ENCODE measurements at regions of chr14 and their contacts with region 1.

Region 1: DNA sequence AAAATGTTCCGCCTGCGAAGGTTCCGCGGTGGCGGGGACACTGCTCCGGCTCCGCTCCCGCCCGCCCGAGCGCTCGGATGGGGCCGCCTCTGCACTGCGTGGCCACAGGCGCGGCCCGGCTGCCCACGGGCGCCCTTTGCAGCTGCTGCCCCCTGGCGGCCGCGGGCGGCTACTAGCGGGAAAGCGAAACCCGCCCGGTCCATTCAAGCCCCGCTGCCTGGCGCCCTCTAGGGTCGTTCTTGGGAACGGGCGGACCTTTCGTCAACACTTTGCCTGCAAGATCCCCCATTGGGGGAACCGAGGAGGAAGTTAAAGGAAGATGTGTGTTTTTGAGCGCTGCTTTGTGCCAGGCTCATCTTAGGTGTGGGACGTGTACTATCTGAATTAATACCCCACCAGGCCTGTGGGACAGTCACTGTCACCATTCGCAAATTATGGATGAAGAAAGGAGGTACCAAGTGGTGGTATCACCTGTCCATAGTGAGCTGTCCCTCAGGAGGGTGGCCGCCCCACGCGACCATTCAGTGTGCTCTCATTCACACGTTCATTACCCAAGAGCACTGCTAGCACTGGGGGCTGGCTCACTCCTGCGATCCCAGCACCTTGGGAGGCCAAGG is 19.4 kb downstream of the GPR132 start:
- DNase-seq: peak; percentile 79
- H3K4me3 Mint-ChIP-seq: no peak overlapping the region
- H3K27ac Mint-ChIP-seq: no peak overlapping the region
- H3K4me1 Mint-ChIP-seq: no peaks in the 10 kb centered on the region
- H3K27me3 Mint-ChIP-seq: no peaks in the 10 kb centered on the region
- CTCF ChIP-seq: peak; percentile 100

Region 2: GRCh38 chr14:104932676-104933631 is 112.9 kb before region 1 on chr14:
- CTCF ChIA-PET with region 1: interaction called, 5 read pairs
- POLR2A ChIA-PET with region 1: interaction called, 3 read pairs
- intact Hi-C with region 1: loop called (anchors 1 kb)
- DNase-seq: peak; percentile 68
- H3K4me3 Mint-ChIP-seq: peak overlapping the region; percentile 65
- H3K27ac Mint-ChIP-seq: no peak overlapping the region
- H3K4me1 Mint-ChIP-seq: peaks cover 10% of the 10 kb centered on the region
- H3K27me3 Mint-ChIP-seq: no peaks in the 10 kb centered on the region
- CTCF ChIP-seq: peak; percentile 83

Region 3: DNA sequence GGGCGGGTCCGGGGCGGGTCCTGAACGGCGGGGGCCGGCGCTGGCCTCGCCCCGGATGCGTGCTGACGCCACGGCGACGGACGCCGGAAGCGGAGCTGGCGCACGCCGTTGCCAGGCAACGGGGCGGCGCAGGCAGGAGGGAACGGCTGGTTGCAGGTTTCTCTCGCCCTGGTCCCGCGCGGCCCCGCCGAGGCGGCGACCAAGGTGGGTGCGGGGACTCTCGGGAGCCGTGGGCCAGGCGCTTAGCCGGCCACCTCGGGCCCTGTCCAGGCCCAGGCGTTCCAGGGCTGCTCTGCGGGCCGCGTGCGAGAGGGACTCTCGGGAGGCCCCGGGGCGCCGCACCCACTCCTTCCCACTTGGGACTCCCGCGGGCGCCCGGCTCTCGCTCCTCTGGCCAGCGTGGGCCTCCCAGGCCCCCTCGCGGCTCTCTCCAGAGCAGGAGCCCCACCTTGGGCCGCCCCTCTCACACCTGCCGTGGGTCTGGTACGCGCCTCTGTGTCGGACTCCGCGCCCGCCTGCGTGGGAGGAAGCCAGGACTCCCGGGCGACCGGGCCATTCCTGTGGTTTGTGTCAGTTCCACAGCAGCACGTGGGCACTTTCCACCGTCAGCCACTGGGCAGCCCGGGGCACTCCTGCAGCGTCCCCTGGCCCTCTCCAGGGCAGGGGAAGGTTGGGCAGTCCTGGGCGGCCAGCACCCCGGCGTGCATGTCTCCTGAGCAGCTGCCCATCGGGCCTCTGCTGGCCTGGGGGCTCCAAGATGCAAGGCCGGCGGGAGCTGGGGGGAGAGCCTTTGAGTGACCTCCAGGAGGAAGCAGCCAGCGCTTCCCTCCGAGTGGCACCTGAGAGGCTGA is 59.9 kb before region 1 on chr14 and contains the start of gene CLBA1:
- CTCF ChIA-PET with region 1: interaction called, 15 read pairs
- POLR2A ChIA-PET with region 1: no interaction called
- intact Hi-C with region 1: no loop called
- DNase-seq: peak; percentile 88
- H3K4me3 Mint-ChIP-seq: peak within 1 kb of the TSS; percentile 65
- H3K27ac Mint-ChIP-seq: peak within 1 kb of the TSS; percentile 63
- H3K4me1 Mint-ChIP-seq: peaks cover 12% of the 10 kb centered on the region
- H3K27me3 Mint-ChIP-seq: no peaks in the 10 kb centered on the region
- CTCF ChIP-seq: no peak
- total RNA-seq, gene CLBA1: 20.3 and 24.3 TPM in 2 replicates

Region 4: GRCh38 chr14:105020815-105021655 is 24.8 kb before region 1 on chr14 and contains the start of gene CDCA4:
- CTCF ChIA-PET with region 1: interaction called, 44 read pairs
- POLR2A ChIA-PET with region 1: interaction called, 9 read pairs
- intact Hi-C with region 1: no loop called
- DNase-seq: peak; percentile 96
- H3K4me3 Mint-ChIP-seq: peak within 1 kb of the TSS; percentile 94
- H3K27ac Mint-ChIP-seq: peak within 1 kb of the TSS; percentile 94
- H3K4me1 Mint-ChIP-seq: peaks cover 43% of the 10 kb centered on the region
- H3K27me3 Mint-ChIP-seq: no peaks in the 10 kb centered on the region
- CTCF ChIP-seq: no peak
- total RNA-seq, gene CDCA4: 29.3 and 33.0 TPM in 2 replicates

Region 5: DNA sequence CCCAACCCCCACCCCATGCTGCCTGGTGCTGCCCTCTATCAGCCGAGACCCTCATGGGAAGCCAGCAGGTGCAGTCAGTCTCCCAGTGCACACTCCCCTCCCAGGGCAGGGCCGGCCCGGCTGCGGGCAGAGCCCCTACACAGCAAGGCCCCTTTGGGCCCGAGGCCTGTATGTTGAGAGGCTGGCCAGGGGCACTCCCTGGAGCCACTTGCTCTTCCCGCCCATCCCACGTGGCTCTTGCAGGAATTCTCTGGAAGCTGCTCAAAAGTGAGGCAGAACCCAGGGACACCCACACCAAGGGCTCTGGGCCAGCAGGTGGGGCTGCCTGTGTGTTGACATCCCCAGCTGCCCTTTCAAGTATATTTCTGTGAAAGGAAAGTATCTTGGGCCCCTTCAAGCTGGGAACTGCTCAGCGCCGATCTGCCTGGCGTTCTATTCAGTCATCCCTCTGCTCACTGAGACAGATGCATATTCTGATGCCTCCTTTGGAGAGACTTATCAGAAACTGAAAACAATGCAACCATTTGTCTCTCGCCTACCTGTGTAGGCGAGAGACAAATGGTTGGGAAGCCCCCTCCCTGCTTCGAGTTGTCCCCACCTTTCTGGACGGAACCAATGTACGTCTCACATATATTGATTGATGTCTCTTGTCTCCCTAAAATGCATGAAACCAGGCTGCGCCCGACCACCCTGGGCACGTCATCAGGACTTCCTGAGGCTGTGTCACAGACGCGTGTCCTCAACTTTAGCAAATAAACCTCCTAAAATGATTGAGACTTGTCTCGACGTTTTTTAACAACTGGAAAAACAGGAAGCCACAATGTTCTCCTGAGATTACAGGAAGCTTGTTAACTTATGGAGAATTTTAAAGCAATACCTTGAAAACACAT is 13.5 kb after region 1 on chr14:
- CTCF ChIA-PET with region 1: interaction called, 10 read pairs
- POLR2A ChIA-PET with region 1: interaction called, 3 read pairs
- intact Hi-C with region 1: no loop called
- DNase-seq: no peak
- H3K4me3 Mint-ChIP-seq: no peak overlapping the region
- H3K27ac Mint-ChIP-seq: no peak overlapping the region
- H3K4me1 Mint-ChIP-seq: no peaks in the 10 kb centered on the region
- H3K27me3 Mint-ChIP-seq: peaks cover 19% of the 10 kb centered on the region
- CTCF ChIP-seq: no peak

Region 6: DNA sequence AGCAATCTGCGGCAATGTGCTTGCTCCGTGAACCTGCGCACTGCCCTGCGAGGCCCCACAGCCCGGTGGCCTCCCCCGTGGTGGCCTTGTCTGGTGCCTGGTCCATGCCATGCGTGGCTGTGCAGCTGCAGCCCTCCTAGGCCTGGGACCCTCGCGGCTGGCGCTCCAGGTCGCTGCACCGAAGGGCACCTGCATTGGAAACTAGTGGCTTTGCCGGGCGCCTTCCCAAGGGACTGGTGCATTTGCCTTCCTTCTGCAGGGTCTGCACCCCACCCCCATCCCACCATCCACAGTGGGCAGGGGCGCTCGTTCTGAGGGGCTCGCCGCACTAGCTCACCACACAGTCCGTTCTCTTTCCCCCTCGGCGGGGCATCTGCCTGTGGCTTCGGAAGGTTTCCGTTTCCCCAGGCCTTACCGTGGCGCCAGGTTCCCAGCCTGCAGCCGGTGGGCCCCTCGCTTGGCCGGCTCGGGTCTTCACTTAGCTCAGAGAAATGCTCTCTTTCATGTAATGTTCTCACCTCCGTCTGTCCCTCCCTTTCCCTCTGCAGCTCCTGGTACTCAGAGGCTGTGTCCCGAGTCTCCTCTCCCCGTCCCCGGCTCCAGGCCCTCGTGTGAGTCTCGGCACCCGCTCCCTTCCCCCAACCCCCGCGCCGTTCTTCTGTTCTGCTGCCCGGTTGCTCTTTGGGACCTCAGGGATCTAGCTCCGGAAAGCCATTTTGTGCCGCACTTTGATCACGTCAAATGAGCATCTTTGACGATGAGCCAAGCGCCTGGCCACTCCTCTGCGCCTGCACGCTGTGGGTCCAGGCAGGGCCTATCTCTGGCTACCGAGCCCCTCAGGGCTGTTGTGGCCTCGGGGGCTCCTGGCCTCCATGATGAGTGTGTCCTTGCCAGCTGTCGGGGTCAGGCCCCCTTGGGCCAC is 90.8 kb after region 1 on chr14:
- CTCF ChIA-PET with region 1: no interaction called
- POLR2A ChIA-PET with region 1: no interaction called
- intact Hi-C with region 1: no loop called
- DNase-seq: no peak
- H3K4me3 Mint-ChIP-seq: no peak overlapping the region
- H3K27ac Mint-ChIP-seq: no peak overlapping the region
- H3K4me1 Mint-ChIP-seq: no peaks in the 10 kb centered on the region
- H3K27me3 Mint-ChIP-seq: peaks cover 14% of the 10 kb centered on the region
- CTCF ChIP-seq: no peak

Region 7: DNA sequence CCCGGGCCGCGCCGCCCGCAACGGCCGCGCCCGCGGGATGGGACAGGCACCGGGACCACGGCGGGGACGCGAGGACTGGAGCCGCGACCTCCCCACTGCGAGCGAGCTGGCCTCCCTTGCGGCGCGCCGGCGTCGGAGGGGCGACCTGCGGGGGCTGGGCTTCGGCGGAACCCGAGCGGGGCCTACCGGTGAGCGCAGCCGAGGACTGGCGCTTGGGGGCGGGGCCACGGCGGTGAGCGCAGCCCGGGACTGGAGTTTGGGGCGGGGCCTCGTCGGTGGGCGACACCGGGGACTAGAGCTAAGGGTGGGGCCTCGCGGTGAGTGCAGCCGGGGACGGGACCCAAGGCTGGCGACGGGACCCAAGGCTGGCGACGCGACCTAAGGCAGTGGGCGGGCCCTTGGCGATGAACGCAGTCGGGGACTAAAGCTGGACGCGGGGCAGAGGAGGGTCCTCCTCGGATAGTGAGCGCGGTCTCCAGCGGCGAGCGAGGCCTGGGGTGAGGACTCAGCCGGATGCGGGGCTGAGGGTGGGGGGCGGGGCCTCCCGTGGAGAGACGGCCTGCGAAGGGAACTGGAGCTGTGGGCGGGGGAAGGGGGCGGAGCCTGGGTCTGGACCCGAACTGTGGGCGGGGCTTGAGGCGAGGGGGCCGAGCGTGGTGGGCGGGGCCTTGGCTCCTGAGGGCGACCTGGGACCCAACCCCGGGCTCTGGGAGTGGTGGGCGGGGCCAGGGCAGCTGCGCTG is 255.1 kb after region 1 on chr14 and contains the start of gene BRF1:
- CTCF ChIA-PET with region 1: no interaction called
- POLR2A ChIA-PET with region 1: no interaction called
- intact Hi-C with region 1: no loop called
- DNase-seq: peak; percentile 96
- H3K4me3 Mint-ChIP-seq: peak within 1 kb of the TSS; percentile 83
- H3K27ac Mint-ChIP-seq: peak within 1 kb of the TSS; percentile 12
- H3K4me1 Mint-ChIP-seq: peaks cover 22% of the 10 kb centered on the region
- H3K27me3 Mint-ChIP-seq: no peaks in the 10 kb centered on the region
- CTCF ChIP-seq: no peak
- total RNA-seq, gene BRF1: 30.7 and 34.3 TPM in 2 replicates

Measured in MCF 10A (cell line).